PC-9 (cell line): ENCODE measurements at regions of chr20 and their contacts with region 1.

Region 1: DNA sequence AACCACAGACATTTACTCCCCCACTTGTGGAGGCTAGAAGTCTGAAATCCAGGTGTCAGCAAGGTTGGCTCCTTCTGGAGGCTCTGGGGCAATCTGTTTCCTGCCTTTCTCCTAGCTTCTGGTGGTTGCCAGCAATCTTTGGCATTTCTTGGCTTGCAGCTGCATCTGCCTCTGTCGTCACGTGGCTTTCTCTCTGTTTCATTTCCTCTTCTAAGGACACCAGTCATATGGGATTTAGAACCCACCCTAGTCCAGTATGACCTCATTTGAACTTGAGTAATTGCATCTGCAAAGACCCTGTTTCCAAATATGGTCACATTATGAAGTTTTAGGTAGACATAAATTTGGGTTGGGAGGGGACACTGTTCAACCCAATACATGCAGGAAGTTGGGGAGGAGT is 56.2 kb upstream of the EPB41L1 start:
- DNase-seq: peak in 1 of 2 experiments; percentile 47
- H3K4me3 ChIP-seq: no peak overlapping the region
- H3K27ac ChIP-seq: peak overlapping the region; percentile 42
- H3K4me1 ChIP-seq: peaks cover 59% of the 10 kb centered on the region
- H3K27me3 ChIP-seq: no peaks in the 10 kb centered on the region
- CTCF ChIP-seq: no peak

Region 2: DNA sequence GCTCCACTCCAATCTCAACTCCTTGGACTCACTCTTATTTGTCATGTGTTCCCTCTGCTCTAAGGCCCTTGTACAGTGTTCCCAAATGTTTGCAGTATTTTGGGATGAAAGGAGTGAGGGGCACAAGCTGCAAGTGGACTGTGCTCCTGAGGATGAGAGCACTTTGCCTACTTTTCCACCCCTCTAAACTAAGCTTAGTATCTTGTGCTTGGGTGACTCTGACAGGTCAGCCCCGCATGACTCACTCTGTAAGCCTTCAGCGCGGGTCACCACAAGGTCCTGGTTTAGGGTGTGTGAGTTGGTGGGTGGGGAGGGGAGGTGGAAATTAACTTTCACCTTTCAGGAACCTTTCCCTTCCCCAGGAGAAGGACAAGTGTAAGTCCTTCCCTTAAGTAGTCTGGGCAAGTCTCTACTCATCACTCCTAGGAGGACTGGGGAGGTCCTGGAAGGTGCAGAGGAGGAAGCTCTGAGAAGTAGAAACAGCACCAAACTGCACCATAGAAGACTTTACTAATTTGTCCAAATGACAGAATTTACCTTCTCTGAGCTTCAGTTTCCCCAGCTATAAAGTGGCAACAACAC is 12.6 kb before region 1 on chr20:
- CTCF ChIA-PET with region 1: interaction called, 4 read pairs
- POLR2A ChIA-PET with region 1: interaction called, 29 read pairs
- intact Hi-C with region 1: no loop called
- DNase-seq: peak; percentile 91 to 96
- H3K4me3 ChIP-seq: peak overlapping the region; percentile 43; the same call in 1 of the 2 replicates
- H3K27ac ChIP-seq: peak overlapping the region; percentile 97
- H3K4me1 ChIP-seq: peaks cover 73% of the 10 kb centered on the region
- H3K27me3 ChIP-seq: no peaks in the 10 kb centered on the region
- CTCF ChIP-seq: no peak

Region 3: GRCh38 chr20:36128463-36129159 is 30.2 kb after region 1 on chr20:
- CTCF ChIA-PET with region 1: no interaction called
- POLR2A ChIA-PET with region 1: interaction called, 12 read pairs
- intact Hi-C with region 1: loop called (anchors 2 kb)
- DNase-seq: peak; percentile 25 to 73
- H3K4me3 ChIP-seq: no peak overlapping the region
- H3K27ac ChIP-seq: peak overlapping the region; percentile 63
- H3K4me1 ChIP-seq: peaks cover 29% of the 10 kb centered on the region
- H3K27me3 ChIP-seq: no peaks in the 10 kb centered on the region
- CTCF ChIP-seq: no peak